Activated CD4-positive, alpha-beta T cell treated with anti-CD3 and anti-CD28 coated beads for 36 hours (primary cell): ENCODE measurements at regions of chr5 and their contacts with region 1.

Region 1: DNA sequence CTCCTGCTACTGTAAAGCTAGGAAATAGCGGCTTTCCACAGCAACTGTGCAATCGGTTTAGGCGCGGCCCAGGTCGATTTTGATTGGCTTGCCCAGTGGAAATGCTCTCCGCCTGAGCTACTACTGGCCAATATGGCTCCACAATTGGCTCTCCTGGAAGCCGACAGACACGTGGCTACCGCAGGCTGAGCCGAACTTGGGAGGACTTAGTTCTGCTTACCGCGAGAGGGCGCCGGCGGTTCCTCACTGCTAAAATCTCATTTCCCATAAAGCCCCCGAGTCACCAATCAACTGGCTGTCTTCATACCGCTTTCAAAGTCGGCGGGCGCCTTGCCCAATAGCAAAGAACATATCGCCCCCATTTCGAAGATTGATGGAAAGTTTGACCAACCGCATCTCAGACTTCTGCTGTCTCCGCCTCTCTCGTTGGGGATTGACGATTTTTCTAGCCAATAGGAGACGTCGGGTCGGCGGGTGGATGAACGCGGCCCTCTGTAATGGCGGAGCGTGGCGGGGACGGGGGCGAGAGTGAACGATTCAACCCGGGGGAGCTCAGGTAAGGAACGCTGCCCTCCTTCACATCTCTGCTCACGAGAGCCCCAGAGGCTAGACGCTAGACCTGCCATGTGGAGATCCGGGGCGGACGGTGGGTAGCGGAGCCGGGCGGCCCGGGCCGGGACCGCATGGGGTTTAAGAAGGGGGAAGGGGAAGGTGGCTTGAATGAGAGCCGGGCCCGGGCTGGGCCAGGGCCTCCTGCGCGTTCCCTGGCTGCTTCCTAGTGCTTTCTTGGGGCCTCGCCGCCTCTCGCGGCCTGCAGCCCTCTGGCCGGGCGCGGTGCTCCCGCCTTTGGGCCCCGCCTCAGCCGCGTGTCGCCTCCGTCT is at the start of gene TCERG1:
- DNase-seq: peak; percentile 99
- ATAC-seq: peak; percentile 92
- H3K4me3 Mint-ChIP-seq: peak within 1 kb of the TSS; percentile 100
- H3K27ac Mint-ChIP-seq: peak within 1 kb of the TSS; percentile 100
- H3K4me1 Mint-ChIP-seq: peaks cover 35% of the 10 kb centered on the region
- H3K27me3 Mint-ChIP-seq: no peaks in the 10 kb centered on the region
- total RNA-seq, gene TCERG1: 126 to 132 TPM

Region 2: DNA sequence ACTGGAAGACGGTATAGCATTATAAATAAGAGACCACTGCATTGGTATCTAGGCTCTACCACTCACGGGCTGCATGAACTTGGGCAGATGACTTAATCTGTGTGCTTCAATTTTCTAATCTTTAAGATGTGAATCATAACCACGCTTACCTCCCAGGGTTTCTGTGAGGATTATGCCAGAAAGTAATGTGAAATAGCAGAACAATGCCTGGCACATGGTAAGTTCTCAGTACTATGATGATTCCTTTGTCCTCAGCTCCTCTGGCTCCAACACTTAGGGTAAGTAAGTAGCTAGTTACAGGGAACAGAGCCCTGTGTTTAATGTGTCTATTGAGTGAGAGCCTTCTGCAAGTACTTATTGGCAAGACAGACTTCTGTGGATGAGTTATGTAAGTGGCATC is 77.4 kb before region 1 on chr5:
- CTCF ChIA-PET with region 1: no interaction called
- POLR2A ChIA-PET with region 1: no interaction called
- intact Hi-C with region 1: no loop called
- DNase-seq: no peak
- ATAC-seq: no peak
- H3K4me3 Mint-ChIP-seq: no peak overlapping the region
- H3K27ac Mint-ChIP-seq: no peak overlapping the region
- H3K4me1 Mint-ChIP-seq: no peaks in the 10 kb centered on the region
- H3K27me3 Mint-ChIP-seq: peaks cover 18% of the 10 kb centered on the region

Region 3: GRCh38 chr5:146461319-146461718 is 14.2 kb after region 1 on chr5:
- CTCF ChIA-PET with region 1: interaction called, 12 read pairs
- POLR2A ChIA-PET with region 1: no interaction called
- intact Hi-C with region 1: no loop called
- DNase-seq: no peak
- ATAC-seq: no peak
- H3K4me3 Mint-ChIP-seq: no peak overlapping the region
- H3K27ac Mint-ChIP-seq: no peak overlapping the region
- H3K4me1 Mint-ChIP-seq: peaks cover 25% of the 10 kb centered on the region
- H3K27me3 Mint-ChIP-seq: no peaks in the 10 kb centered on the region